Pancreas (tissue), 10 donors: ENCODE measurements at regions of chr17 and their contacts with region 1.

Region 1: GRCh38 chr17:75173526-75173925 is 9.2 kb downstream of the SUMO2 start:
- DNase-seq: peak in 1 of 6 donors; percentile 5
- ATAC-seq: no peak
- H3K4me3 ChIP-seq: no peak overlapping the region
- H3K27ac ChIP-seq: no peak overlapping the region
- H3K4me1 ChIP-seq: no peaks in the 10 kb centered on the region
- H3K27me3 ChIP-seq: no peaks in the 10 kb centered on the region
- CTCF ChIP-seq: no peak

Region 2: DNA sequence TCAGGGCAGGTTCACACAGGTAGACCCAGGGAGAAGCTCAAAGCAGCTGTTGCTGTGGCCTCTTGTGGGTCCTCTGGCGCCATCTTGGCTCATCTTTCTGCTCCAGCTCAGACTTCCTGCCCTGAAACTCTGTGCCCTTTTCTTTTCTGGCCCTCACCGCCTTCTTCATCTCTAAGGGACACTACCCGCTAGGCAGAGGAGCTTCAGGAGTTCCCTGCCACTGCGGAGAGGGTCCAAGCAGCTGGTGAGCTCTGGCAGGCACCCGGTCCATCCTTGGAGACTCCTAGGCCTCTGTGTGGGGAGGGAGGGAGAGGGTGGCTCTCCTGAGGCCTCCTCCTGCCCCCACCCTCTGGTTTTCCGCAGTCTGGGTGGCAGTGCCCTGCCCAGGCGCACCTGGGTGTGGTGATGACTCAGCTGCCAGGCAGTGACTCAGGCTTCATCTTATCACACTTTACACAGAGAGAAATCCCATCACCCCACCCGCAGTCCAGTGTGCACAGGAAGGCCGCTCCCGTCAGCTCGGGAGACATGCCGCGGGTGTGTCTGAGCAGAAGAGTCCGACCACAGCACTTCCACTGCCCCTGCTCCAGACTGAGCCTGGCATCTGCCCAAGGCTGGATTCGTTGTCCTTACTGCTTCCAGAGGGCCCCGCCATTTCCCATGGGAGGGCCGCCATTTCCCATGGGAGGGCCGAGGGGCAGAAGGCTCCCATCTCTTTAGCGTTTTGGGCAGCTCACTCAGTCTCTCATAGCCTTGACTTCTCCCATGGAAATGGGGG is 49.3 kb before region 1 on chr17:
- intact Hi-C with region 1: loop called in 1 of 3 experiments (anchors 10 kb)
- DNase-seq: peak in 4 of 6 donors; percentile 19 to 58 (median 56)
- ATAC-seq: peak; percentile 59 to 90 (median 84)
- H3K4me3 ChIP-seq: no peak overlapping the region
- H3K27ac ChIP-seq: peak overlapping the region in 1 of 4 donors; percentile 27
- H3K4me1 ChIP-seq: peaks cover 0 to 8% (median 0%) of the 10 kb centered on the region in 3 donors
- H3K27me3 ChIP-seq: no peaks in the 10 kb centered on the region
- CTCF ChIP-seq: no peak

Region 3: GRCh38 chr17:75440738-75441448 is 267.4 kb after region 1 on chr17:
- intact Hi-C with region 1: no loop called
- DNase-seq: no peak
- ATAC-seq: no peak
- H3K4me3 ChIP-seq: no peak overlapping the region
- H3K27ac ChIP-seq: no peak overlapping the region
- H3K4me1 ChIP-seq: no peaks in the 10 kb centered on the region
- H3K27me3 ChIP-seq: no peaks in the 10 kb centered on the region
- CTCF ChIP-seq: no peak